Activated CD8-positive, alpha-beta T cell treated with anti-CD3 and anti-CD28 coated beads, Interleukin-2, amount 10 ng/mL, durations not matched to agents 7 days and 5 days (primary cell): ENCODE measurements at regions of chr16 and their contacts with region 1.

Region 1: GRCh38 chr16:19886073-19886941 is 1.7 kb upstream of the GPRC5B start:
- DNase-seq: peak; percentile 86
- ATAC-seq: peak; percentile 64
- H3K4me3 Mint-ChIP-seq: peak overlapping the region; percentile 59
- H3K27ac Mint-ChIP-seq: no peak overlapping the region
- H3K4me1 Mint-ChIP-seq: peaks cover 20% of the 10 kb centered on the region
- H3K27me3 Mint-ChIP-seq: peaks cover 31% of the 10 kb centered on the region

Region 2: GRCh38 chr16:19563377-19563776 is 322.9 kb before region 1 on chr16:
- CTCF ChIA-PET with region 1: interaction called, 44 read pairs
- POLR2A ChIA-PET with region 1: no interaction called
- DNase-seq: no peak
- ATAC-seq: no peak
- H3K4me3 Mint-ChIP-seq: no peak overlapping the region
- H3K27ac Mint-ChIP-seq: no peak overlapping the region
- H3K4me1 Mint-ChIP-seq: peaks cover 2% of the 10 kb centered on the region
- H3K27me3 Mint-ChIP-seq: no peaks in the 10 kb centered on the region

Region 3: GRCh38 chr16:19601083-19601976 is 285.0 kb before region 1 on chr16:
- CTCF ChIA-PET with region 1: interaction called, 70 read pairs
- POLR2A ChIA-PET with region 1: no interaction called
- DNase-seq: peak; percentile 54
- ATAC-seq: no peak
- H3K4me3 Mint-ChIP-seq: no peak overlapping the region
- H3K27ac Mint-ChIP-seq: no peak overlapping the region
- H3K4me1 Mint-ChIP-seq: no peaks in the 10 kb centered on the region
- H3K27me3 Mint-ChIP-seq: no peaks in the 10 kb centered on the region

Region 4: DNA sequence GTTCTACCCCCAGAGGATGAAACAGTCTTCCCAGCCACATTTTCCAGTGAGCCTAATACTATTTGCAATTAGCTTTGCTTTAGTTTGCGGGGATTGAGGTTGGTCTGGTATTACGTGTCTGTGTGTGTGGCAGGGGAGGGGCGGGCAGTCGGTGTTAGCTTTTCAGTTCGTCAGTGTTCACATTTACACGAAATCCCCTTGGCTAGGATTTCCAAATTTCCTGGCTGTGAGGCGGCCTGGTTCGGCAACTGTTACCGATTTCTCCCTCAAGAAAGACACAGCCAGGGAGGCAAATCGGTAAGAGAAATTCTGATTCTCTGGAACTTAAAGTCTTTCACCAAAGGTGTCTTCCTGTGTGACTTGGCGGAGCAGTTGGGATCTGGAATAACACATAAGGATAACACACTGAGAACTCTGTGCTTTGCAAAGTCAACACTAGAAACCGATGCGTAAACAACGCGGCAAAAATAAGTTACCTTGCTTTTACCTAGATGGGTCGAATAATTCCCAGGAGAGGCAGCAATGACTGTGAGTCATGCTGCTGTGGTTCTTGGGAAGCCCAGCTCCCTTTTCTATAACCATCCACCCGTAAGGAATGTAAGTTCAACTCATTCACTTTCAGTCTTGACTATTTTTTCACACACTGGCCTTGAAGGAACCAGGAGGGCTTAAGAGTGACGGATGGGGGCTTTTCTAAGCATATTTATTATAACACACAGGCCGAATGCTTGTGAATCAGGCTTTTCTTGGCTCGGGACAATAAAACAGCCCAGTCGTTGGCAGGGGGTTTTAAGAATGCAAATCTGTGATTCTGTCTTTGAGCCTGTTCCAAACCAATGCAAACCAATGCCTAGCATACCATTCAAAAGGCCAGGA is 25.9 kb before region 1 on chr16:
- CTCF ChIA-PET with region 1: no interaction called
- POLR2A ChIA-PET with region 1: no interaction called
- DNase-seq: no peak
- ATAC-seq: no peak
- H3K4me3 Mint-ChIP-seq: no peak overlapping the region
- H3K27ac Mint-ChIP-seq: no peak overlapping the region
- H3K4me1 Mint-ChIP-seq: no peaks in the 10 kb centered on the region
- H3K27me3 Mint-ChIP-seq: no peaks in the 10 kb centered on the region

Region 5: GRCh38 chr16:19907161-19907992 is 21.1 kb after region 1 on chr16:
- CTCF ChIA-PET with region 1: interaction called, 19 read pairs
- POLR2A ChIA-PET with region 1: no interaction called
- DNase-seq: peak; percentile 82
- ATAC-seq: peak; percentile 98
- H3K4me3 Mint-ChIP-seq: peak overlapping the region; percentile 13
- H3K27ac Mint-ChIP-seq: peak overlapping the region; percentile 14
- H3K4me1 Mint-ChIP-seq: peaks cover 8% of the 10 kb centered on the region
- H3K27me3 Mint-ChIP-seq: peaks cover 2% of the 10 kb centered on the region

Region 6: GRCh38 chr16:19935699-19936098 is 49.4 kb after region 1 on chr16:
- CTCF ChIA-PET with region 1: no interaction called
- POLR2A ChIA-PET with region 1: no interaction called
- DNase-seq: no peak
- ATAC-seq: no peak
- H3K4me3 Mint-ChIP-seq: no peak overlapping the region
- H3K27ac Mint-ChIP-seq: no peak overlapping the region
- H3K4me1 Mint-ChIP-seq: no peaks in the 10 kb centered on the region
- H3K27me3 Mint-ChIP-seq: peaks cover 3% of the 10 kb centered on the region

Region 7: GRCh38 chr16:19963301-19963700 is 77.0 kb after region 1 on chr16:
- CTCF ChIA-PET with region 1: no interaction called
- POLR2A ChIA-PET with region 1: no interaction called
- DNase-seq: no peak
- ATAC-seq: no peak
- H3K4me3 Mint-ChIP-seq: no peak overlapping the region
- H3K27ac Mint-ChIP-seq: no peak overlapping the region
- H3K4me1 Mint-ChIP-seq: no peaks in the 10 kb centered on the region
- H3K27me3 Mint-ChIP-seq: no peaks in the 10 kb centered on the region